Vagina (tissue), 2 donors: ENCODE measurements at regions of chr14 and their contacts with region 1.

Region 1: DNA sequence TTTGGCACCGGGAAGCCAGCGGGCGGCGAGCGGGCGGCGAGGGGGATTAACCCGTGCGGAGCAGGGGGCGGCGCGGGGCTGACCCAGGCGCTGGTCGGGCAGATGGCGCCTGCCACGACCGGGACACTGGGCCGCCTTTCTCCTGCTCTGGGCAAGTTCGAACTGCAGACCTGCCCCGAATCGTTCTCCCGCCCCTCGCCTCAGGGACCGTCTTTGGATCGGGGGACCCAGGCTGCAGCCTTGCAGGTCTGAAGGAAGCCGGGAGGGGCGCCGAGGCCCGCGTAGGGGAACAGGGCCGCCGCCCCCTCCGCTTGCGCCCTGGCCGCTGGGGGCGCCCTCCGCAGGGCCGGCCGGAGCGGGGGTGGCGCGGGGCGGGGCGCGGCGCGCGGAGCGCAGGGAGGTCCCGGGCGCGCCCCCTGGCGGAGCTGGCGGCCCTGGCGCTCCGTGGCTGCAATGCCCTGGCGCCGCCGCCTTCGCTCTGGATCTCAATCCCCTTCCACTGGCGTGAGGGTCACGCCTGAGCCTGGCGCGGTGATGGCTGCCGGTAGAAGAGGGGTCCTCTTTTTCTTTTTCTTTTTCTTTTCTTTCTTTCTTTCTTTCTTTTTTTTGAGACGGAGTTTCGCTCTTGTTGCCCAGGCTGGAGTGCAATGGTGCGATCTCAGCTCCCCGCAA is 449 bp upstream of the LTBP2 start:
- DNase-seq: no peak
- H3K4me3 ChIP-seq: peak overlapping the region; percentile 62 to 71
- H3K27ac ChIP-seq: peak overlapping the region; percentile 72
- H3K4me1 ChIP-seq: peaks cover 68% of the 10 kb centered on the region
- H3K27me3 ChIP-seq: no peaks in the 10 kb centered on the region
- CTCF ChIP-seq: peak; percentile 15 to 41 (median 30)
- POLR2A ChIP-seq: no peak

Region 2: GRCh38 chr14:74501135-74501614 is 111.3 kb before region 1 on chr14:
- intact Hi-C with region 1: loop called (anchors 2 kb)
- DNase-seq: no peak
- H3K4me3 ChIP-seq: no peak overlapping the region
- H3K27ac ChIP-seq: peak overlapping the region; percentile 15
- H3K4me1 ChIP-seq: peaks cover 7% of the 10 kb centered on the region
- H3K27me3 ChIP-seq: no peaks in the 10 kb centered on the region
- CTCF ChIP-seq: peak in 2 of 3 experiments; percentile 33 to 44
- POLR2A ChIP-seq: no peak

Region 3: DNA sequence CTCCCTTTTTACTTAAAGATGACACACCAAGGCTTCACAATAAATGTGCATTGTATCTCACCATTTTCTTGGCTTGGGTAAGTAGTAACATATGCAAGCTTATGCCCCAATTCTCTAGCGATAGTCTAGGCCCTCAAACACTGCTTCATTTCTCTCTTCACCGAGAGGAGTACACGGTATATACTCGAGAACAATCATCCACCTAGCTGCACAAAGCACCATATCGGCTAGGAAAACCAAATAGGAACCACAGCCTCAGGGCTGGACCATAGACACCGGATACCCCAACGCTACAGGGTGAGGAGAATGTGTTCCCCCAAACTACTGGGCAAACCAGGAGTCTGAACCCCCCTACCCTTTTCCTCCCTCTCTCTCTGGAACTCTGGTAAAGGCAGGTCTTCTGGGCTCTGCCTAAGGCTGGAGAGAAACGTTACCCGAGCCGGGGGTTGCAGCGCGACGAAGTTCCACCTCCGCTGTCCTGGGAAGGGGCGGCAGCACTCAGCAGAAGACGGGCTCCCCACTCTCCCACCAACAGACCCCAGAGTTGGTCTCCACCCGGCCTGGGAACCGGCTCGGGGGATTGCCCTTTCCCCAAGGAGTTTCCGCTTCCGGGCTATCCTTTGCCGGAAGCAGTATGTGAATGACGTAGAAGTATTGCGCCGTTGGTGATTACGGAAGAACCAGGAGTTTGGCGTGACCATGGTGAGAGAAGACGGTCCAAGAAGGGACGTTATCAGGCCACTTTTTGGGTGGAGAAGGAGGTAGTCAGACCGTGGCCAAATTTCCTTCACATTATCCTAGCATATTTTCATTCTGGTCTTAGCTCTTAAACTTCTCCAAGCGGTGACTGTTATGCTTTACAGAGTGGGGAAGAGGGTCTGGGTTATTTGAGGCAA is 100.3 kb after region 1 on chr14 and contains the starts of genes AREL1 and FCF1:
- intact Hi-C with region 1: loop called (anchors 5 kb)
- DNase-seq: peak; percentile 86 to 96
- H3K4me3 ChIP-seq: peak within 1 kb of the TSS; percentile 51 to 67
- H3K27ac ChIP-seq: peak within 1 kb of the TSS; percentile 71
- H3K4me1 ChIP-seq: peaks cover 35% of the 10 kb centered on the region
- H3K27me3 ChIP-seq: no peaks in the 10 kb centered on the region
- CTCF ChIP-seq: no peak
- POLR2A ChIP-seq: no peak
- total RNA-seq, gene AREL1: 32.7 TPM
- total RNA-seq, gene FCF1: 11.0 TPM

Region 4: DNA sequence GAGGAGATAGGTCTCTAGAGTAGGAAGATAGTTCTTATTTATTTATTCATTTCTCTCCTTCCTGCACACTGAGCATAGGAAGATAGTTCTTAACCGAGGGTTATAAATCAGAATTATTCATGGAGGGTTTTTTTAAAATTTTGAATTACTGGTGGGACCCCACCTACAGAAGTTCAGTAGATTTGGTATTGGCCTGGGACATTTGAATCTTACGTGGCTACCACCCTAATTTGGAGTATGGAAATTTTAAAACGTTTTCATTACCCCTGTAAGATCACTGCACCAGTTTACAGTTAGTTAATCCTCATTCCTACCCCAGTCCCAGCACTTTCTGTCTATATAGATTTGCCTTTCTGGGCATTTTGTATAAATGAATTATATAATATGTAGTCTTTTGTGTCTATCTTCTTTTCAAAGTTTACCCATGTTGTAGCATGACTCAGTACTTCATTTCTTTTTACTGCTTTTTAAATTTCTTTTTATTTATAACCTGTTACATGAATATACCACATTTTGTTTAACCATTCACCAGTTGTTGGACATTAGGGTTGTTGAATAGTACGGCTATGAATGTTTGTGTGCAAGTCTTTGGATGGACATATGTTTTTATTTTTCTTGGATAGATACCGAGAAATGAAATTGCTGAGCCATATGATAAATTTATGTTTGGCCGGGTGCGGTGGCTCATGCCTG is 195.5 kb after region 1 on chr14:
- intact Hi-C with region 1: loop called (anchors 5 kb)
- DNase-seq: no peak
- H3K4me3 ChIP-seq: no peak overlapping the region
- H3K27ac ChIP-seq: no peak overlapping the region
- H3K4me1 ChIP-seq: no peaks in the 10 kb centered on the region
- H3K27me3 ChIP-seq: no peaks in the 10 kb centered on the region
- CTCF ChIP-seq: no peak
- POLR2A ChIP-seq: no peak